A549 (cell line): ENCODE measurements at regions of chr14 and their contacts with region 1.

Region 1: DNA sequence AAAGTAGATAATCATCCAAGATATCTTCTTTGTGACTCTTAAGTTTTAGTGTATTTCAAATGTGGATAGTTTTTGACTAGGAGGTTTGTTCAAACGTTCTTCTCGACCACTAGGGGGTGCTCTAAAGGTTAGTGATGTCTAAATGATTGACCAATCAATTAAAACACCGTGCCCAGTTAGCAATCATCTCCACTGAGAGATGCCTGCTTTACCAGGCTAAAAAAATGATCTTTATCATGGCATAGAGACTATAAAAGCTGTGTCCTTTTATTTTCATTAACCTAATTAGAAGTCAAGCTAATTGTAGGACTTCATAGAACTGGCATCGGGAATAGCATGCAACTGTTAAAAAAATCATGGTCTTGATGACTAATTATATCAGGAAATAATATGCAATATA is 153.9 kb downstream of the PRKCH start:
- DNase-seq: peak; percentile 53 to 80
- ATAC-seq: no peak
- H3K4me3 ChIP-seq: no peak overlapping the region
- H3K27ac ChIP-seq: peak overlapping the region; percentile 95 to 96
- H3K4me1 ChIP-seq: peaks cover 88% of the 10 kb centered on the region
- CTCF ChIP-seq: peak; percentile 81
- EP300 ChIP-seq: no peak
- POLR2A ChIP-seq: no peak
- RAD21 ChIP-seq: peak; percentile 67 to 72

Region 2: DNA sequence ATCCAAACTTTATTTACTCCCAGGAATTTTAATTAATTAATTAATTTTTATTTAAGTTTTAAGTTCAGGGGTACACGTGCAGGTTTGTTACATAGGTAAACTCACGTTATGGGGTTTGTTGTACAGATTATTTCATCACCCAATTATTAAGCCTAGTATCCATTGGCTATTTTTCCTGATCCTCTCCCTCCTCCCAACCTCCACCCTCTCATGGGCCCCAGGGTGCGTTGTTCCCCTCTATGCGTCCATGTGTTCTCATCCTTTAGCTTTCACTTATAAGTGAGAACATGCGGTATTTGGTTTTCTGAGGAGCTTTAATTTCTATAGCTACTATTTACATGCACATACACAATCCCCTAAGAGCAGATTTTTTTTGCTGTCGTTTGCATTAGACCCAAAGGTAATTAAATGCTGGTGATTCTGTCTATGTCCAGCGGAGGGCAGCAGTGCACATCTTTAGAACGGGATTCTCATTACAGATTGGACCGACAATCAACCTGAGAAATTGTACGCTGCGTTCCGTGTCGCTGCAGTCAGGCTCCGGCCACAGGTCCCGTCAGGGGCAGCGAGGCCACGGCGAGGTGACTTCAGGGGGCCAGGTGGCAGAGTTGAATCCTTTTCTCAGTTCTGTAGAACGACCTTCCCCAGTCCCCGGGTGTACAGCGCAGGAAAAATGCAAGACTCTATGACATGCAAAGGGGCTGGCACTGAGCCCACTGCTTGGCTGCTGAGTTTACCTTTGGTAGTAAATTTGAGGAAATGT is 205.8 kb before region 1 on chr14:
- CTCF ChIA-PET with region 1: no interaction called
- POLR2A ChIA-PET with region 1: no interaction called
- DNase-seq: peak; percentile 73 to 77
- ATAC-seq: peak; percentile 90 to 93
- H3K4me3 ChIP-seq: peak overlapping the region; percentile 37
- H3K27ac ChIP-seq: peak overlapping the region; percentile 36 to 75; a peak in 4 of 6 replicates
- H3K4me1 ChIP-seq: no peaks in the 10 kb centered on the region
- CTCF ChIP-seq: peak; percentile 86
- EP300 ChIP-seq: no peak
- POLR2A ChIP-seq: no peak
- RAD21 ChIP-seq: peak; percentile 78 to 82

Region 3: GRCh38 chr14:61461808-61462275 is 13.5 kb before region 1 on chr14:
- CTCF ChIA-PET with region 1: interaction called, 34 read pairs
- POLR2A ChIA-PET with region 1: interaction called, 4 read pairs
- DNase-seq: peak; percentile 72 to 73
- ATAC-seq: peak; percentile 74
- H3K4me3 ChIP-seq: no peak overlapping the region
- H3K27ac ChIP-seq: peak overlapping the region; percentile 86 to 89
- H3K4me1 ChIP-seq: peaks cover 45% of the 10 kb centered on the region
- CTCF ChIP-seq: peak; percentile 90
- EP300 ChIP-seq: no peak
- POLR2A ChIP-seq: no peak
- RAD21 ChIP-seq: peak; percentile 93 to 95

Region 4: GRCh38 chr14:61525293-61526011 is 50.1 kb after region 1 on chr14:
- CTCF ChIA-PET with region 1: interaction called, 12 read pairs
- POLR2A ChIA-PET with region 1: interaction called, 3 read pairs
- DNase-seq: peak; percentile 56 to 88
- ATAC-seq: peak; percentile 76 to 83
- H3K4me3 ChIP-seq: no peak overlapping the region
- H3K27ac ChIP-seq: peak overlapping the region; percentile 91 to 92
- H3K4me1 ChIP-seq: peaks cover 62% of the 10 kb centered on the region
- CTCF ChIP-seq: no peak
- EP300 ChIP-seq: peak; percentile 76 to 88; a peak in 4 of 5 replicates
- POLR2A ChIP-seq: no peak
- RAD21 ChIP-seq: peak in 1 of 2 experiments; percentile 48; a peak in 2 of 5 replicates

Region 5: GRCh38 chr14:61553725-61554641 is 78.7 kb after region 1 on chr14:
- CTCF ChIA-PET with region 1: interaction called, 28 read pairs
- POLR2A ChIA-PET with region 1: interaction called, 37 read pairs
- DNase-seq: peak; percentile 85 to 97
- ATAC-seq: peak; percentile 91 to 95
- H3K4me3 ChIP-seq: no peak overlapping the region
- H3K27ac ChIP-seq: peak overlapping the region; percentile 96 to 99
- H3K4me1 ChIP-seq: peaks cover 86% of the 10 kb centered on the region
- CTCF ChIP-seq: no peak
- EP300 ChIP-seq: peak; percentile 100
- POLR2A ChIP-seq: no peak
- RAD21 ChIP-seq: peak; percentile 41 to 76

Region 6: DNA sequence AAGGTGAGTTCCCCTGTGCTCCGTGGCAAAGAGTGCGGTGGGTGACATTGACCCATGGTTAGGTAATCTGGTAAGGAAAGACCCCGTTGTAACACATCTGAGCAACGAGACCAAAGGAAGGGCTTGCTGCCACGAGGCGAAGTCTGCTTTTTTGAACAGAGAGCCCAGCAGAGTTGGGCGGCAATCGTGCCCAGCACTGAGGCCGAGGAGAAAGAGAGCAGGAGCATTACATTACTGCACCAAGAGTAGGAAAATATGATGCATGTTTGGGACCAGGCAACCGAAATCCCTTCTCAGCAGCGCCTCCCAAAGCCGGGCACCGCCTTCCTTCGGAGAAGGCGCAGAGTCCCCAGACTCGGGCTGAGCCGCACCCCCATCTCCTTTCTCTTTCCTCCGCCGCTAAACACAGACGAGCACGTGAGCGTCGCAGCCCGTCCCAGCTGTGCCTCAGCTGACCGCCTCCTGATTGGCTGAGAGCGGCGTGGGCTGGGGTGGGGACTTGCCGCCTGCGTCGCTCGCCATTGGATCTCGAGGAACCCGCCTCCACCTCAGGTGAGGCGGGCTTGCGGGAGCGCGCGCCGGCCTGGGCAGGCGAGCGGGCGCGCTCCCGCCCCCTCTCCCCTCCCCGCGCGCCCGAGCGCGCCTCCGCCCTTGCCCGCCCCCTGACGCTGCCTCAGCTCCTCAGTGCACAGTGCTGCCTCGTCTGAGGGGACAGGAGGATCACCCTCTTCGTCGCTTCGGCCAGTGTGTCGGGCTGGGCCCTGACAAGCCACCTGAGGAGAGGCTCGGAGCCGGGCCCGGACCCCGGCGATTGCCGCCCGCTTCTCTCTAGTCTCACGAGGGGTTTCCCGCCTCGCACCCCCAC is 219.7 kb after region 1 on chr14 and contains the start of gene HIF1A:
- CTCF ChIA-PET with region 1: interaction called, 5 read pairs
- POLR2A ChIA-PET with region 1: interaction called, 11 read pairs
- DNase-seq: peak; percentile 93 to 98
- ATAC-seq: peak; percentile 90 to 93
- H3K4me3 ChIP-seq: peak within 1 kb of the TSS; percentile 88
- H3K27ac ChIP-seq: peak within 1 kb of the TSS; percentile 98
- H3K4me1 ChIP-seq: peaks cover 9% of the 10 kb centered on the region; the same call in 2 of the 3 replicates
- CTCF ChIP-seq: peak; percentile 29; the same call in 2 of the 3 replicates
- EP300 ChIP-seq: no peak
- POLR2A ChIP-seq: peak; percentile 95
- RAD21 ChIP-seq: peak; percentile 39 to 60; a peak in 4 of 5 replicates
- polyA plus RNA-seq, gene HIF1A: 284 and 383 TPM in 2 replicates